ENCODE measurements at regions of chr10 and their contacts with region 1.

Region 1: GRCh38 chr10:38010119-38010903 is at the start of gene ZNF33A:
- DNase-seq: peak; percentile 95
- H3K4me3 Mint-ChIP-seq: peak within 1 kb of the TSS; percentile 93
- H3K27ac Mint-ChIP-seq: peak within 1 kb of the TSS; percentile 99
- H3K4me1 Mint-ChIP-seq: peaks cover 25% of the 10 kb centered on the region
- H3K27me3 Mint-ChIP-seq: no peaks in the 10 kb centered on the region
- total RNA-seq, gene ZNF33A: 26.2 to 27.1 TPM

Region 2: DNA sequence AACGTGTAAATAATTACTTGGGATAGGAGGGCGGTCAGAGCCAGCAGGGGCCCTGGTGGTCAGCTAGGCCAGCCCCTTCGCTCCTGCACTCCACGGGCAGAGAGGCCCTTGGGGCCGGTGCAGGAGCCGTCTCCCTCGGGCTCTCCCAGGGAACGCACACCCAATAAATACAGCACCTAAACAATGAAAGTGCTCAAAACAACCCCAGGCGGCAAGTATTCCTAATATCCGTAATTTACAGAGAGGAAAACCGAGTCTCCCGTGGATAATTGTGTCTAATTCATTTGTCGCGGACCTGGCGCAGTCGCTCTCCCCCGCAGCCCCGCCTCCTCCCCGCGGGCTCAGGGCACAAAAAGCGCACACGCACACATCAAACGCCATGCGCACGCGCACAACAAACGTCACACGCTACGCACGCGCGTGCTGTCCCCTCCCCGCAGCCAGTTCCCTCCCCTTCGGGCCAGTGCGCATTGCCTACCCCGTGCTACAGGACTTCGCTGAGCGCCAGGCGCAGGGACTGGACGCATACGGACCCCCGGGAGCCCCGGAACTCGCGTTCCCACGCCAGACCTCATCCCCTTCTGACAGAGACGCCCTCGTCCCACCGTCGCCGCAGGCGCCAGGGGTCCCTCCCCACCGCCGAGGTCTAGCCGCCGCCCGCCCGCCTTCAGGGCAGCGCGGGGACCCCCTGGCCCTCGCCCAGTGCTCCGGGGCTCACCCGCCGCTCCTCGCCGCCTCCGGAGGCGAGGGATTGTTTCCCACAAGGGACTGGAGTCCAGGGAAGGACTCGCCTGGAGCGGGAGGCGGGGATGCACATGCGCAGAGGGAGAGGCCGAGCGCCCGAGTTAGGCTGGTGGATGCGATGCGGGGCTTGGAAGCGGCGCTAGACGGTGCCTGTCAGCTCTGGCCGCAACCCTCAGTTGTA is 152.8 kb before region 1 on chr10 and contains the start of gene ZNF248:
- CTCF ChIA-PET with region 1: no interaction called
- intact Hi-C with region 1: loop called (anchors 1 kb)
- DNase-seq: peak; percentile 94
- H3K4me3 Mint-ChIP-seq: peak within 1 kb of the TSS; percentile 92
- H3K27ac Mint-ChIP-seq: peak within 1 kb of the TSS; percentile 97
- H3K4me1 Mint-ChIP-seq: peaks cover 30% of the 10 kb centered on the region
- H3K27me3 Mint-ChIP-seq: no peaks in the 10 kb centered on the region
- total RNA-seq, gene ZNF248: 4.6 to 5.5 TPM

Region 3: DNA sequence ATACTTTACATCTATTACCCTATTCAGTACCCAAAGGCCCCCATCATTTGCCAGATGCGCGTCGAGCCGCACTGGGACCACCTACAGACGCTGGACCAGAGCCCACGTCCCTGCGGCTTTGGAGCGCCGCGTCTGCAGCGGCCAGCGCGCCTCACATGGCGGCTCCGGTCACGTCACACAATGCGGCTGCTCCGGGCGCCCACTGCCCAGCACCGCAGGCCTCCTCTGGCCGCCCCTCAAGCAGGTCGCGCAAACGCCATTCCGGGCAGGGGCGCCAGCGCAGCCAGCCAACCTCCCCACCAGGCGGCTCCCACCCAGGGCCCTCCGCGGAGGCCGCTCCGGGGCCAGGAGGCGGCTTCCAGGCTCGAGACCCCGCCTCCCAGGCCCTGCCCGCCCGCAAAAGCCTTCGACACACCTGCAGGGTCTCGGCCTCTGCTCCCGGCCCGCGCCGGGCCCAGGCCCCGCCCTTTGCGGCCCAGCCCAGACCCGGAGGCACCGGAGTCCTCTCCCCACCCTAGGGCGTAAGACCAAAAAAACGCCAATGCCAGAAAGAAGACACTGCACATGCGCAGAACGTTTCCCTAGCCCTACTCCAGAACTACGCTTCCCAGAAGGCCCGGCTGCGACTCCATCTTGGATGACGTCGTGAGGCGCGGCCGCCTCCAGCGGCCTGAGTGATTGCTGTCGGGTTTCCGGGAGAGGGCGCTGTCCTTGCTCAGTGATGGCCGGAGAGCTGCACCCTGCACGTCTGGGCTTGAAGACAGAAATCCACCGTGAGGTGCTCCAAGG is 34.0 kb before region 1 on chr10 and contains the start of gene ZNF25:
- CTCF ChIA-PET with region 1: interaction called, 11 read pairs
- intact Hi-C with region 1: loop called (anchors 1 kb)
- DNase-seq: peak; percentile 99
- H3K4me3 Mint-ChIP-seq: peak within 1 kb of the TSS; percentile 87
- H3K27ac Mint-ChIP-seq: peak within 1 kb of the TSS; percentile 95
- H3K4me1 Mint-ChIP-seq: peaks cover 22% of the 10 kb centered on the region
- H3K27me3 Mint-ChIP-seq: no peaks in the 10 kb centered on the region
- total RNA-seq, gene ZNF25: 7.6 to 9.4 TPM

Region 4: DNA sequence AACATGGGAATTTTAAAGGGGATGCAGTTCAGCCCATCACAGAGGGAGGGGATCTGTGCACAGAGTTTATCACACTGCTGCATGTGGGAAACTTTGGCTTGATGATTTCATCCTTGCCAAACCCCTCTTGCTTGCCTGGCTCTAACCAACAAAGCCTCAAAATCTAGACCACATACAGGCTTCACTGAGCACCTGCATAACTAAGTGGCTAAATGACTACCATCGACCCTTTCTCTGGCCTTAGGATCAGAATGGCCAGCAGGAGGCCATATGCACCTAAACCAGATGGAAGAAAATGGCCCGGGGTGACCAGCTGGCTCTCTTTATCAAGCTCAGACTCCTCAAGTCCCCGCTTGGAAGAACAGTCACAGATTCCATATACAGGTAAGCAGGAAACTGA is 18.2 kb before region 1 on chr10:
- CTCF ChIA-PET with region 1: no interaction called
- intact Hi-C with region 1: loop called (anchors 2 kb)
- DNase-seq: no peak
- H3K4me3 Mint-ChIP-seq: no peak overlapping the region
- H3K27ac Mint-ChIP-seq: no peak overlapping the region
- H3K4me1 Mint-ChIP-seq: no peaks in the 10 kb centered on the region
- H3K27me3 Mint-ChIP-seq: peaks cover 2% of the 10 kb centered on the region

Region 5: GRCh38 chr10:38038107-38038931 is 28.0 kb after region 1 on chr10:
- CTCF ChIA-PET with region 1: no interaction called
- intact Hi-C with region 1: loop called (anchors 1 kb)
- DNase-seq: no peak
- H3K4me3 Mint-ChIP-seq: peak overlapping the region; percentile 60
- H3K27ac Mint-ChIP-seq: peak overlapping the region; percentile 87
- H3K4me1 Mint-ChIP-seq: peaks cover 28% of the 10 kb centered on the region
- H3K27me3 Mint-ChIP-seq: no peaks in the 10 kb centered on the region

Region 6: GRCh38 chr10:38094158-38094920 is 84.0 kb after region 1 on chr10 and contains the start of gene ZNF37A:
- CTCF ChIA-PET with region 1: interaction called, 4 read pairs
- intact Hi-C with region 1: loop called (anchors 1 kb)
- DNase-seq: peak; percentile 95
- H3K4me3 Mint-ChIP-seq: peak within 1 kb of the TSS; percentile 85
- H3K27ac Mint-ChIP-seq: peak within 1 kb of the TSS; percentile 87
- H3K4me1 Mint-ChIP-seq: peaks cover 33% of the 10 kb centered on the region
- H3K27me3 Mint-ChIP-seq: no peaks in the 10 kb centered on the region
- total RNA-seq, gene ZNF37A: 15.5 to 18.8 TPM

Measured in activated naive CD4-positive, alpha-beta T cell treated with anti-CD3 and anti-CD28 coated beads for 36 hours (primary cell).